RWPE1 (cell line): ENCODE measurements at regions of chr15 and their contacts with region 1.

Region 1: DNA sequence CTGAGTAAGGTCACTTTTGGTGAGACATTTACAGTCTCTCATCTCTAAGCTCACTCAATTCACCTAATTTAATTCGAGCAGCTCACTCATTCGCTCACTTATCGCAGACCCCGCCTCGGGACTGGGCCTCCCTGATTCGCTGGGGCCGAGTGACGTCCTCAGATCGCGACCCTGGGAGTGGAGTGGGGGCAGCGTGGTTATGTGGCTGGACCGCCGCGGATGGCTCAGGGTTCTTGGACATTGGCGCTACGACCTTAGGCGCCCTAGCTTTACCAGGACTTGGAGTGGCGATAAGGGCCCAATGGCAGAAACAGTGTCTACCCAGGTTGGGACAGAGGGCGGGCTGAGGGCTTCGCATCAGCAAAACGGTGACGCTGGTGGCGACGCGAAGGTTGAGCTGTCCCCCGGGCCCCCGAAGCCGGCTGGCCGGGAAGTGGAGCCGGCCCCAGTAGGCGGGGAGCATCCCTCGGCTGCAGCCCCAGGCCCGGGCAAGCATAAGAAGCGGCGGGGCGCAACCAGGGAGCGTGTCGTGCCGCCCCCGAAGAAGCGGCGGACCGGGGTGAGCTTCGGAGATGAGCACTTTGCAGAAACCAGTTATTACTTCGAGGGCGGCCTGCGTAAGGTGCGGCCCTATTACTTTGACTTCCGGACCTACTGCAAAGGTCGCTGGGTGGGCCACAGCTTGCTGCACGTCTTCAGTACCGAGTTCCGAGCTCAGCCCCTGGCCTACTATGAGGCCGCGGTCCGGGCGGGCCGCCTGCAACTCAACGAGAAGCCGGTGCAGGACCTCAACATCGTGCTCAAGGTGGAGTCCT is at the start of gene RPUSD2:
- DNase-seq: peak; percentile 97
- H3K27ac ChIP-seq: peak within 1 kb of the TSS; percentile 73
- CTCF ChIP-seq: no peak

Region 2: DNA sequence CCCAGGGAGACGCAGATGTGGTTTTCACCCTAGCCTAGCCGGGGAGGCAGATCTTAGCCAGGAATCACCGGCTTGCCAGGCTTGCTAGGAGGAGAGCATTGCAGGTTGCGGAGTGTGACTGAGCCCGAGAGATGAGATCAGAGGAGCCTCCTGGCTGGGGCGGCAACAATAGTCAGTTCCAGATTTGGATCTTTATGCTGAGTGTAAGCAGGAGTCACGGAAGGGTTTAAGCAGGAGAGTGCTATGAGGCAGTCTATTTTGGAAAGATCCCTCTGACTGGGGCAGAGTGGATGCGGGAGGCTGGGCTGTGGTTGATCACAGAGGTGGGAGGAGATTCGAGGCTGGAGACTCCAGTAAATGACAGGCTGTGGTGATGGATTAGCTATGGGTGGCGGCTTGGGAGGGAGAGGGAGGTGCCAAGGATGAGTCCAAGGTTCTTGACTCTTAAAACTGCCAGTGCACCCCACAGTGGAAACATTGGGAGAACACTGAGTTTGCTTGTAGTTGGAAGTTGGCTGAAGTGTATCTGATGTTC is 139.0 kb before region 1 on chr15:
- CTCF ChIA-PET with region 1: no interaction called
- POLR2A ChIA-PET with region 1: no interaction called
- DNase-seq: no peak
- H3K27ac ChIP-seq: no peak overlapping the region
- CTCF ChIP-seq: no peak

Region 3: DNA sequence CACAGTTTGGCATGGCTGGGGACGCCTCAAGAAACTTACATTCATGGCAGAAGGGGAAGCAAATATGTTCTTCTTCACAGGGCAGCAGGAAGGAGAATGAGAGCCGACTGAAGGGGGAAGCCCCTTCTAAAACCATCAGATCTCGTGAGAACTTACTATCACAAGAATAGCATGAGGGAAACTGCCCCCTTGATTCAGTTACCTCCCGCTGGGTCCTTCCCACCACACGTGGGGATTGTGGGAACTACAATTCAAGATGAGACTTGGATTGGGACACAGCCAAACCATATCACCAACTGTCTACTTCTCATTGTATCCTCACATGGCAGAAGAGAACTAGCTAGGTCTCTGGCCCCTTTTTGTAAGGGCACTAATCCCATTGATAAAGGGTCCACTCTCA is 35.0 kb before region 1 on chr15:
- CTCF ChIA-PET with region 1: no interaction called
- POLR2A ChIA-PET with region 1: no interaction called
- DNase-seq: no peak
- H3K27ac ChIP-seq: no peak overlapping the region
- CTCF ChIP-seq: no peak

Region 4: GRCh38 chr15:40590667-40591050 is 21.3 kb after region 1 on chr15:
- CTCF ChIA-PET with region 1: interaction called, 15 read pairs
- POLR2A ChIA-PET with region 1: no interaction called
- DNase-seq: no peak
- H3K27ac ChIP-seq: no peak overlapping the region
- CTCF ChIP-seq: no peak